ENCODE measurements at regions of chr16 and their contacts with region 1.

Region 1: GRCh38 chr16:3490911-3491629 is 4.2 kb downstream of the C16orf90 start:
- DNase-seq: no peak
- ATAC-seq: peak in 5 of 8 donors; percentile 4 to 25 (median 14)
- H3K4me3 ChIP-seq: no peak overlapping the region
- H3K27ac ChIP-seq: no peak overlapping the region
- H3K4me1 ChIP-seq: peaks cover 0 to 24% (median 9%) of the 10 kb centered on the region in 9 donors
- H3K27me3 ChIP-seq: no peaks in the 10 kb centered on the region
- CTCF ChIP-seq: peak in 2 of 9 donors; percentile 10 to 21

Region 2: GRCh38 chr16:3182608-3183444 is 308.2 kb before region 1 on chr16:
- intact Hi-C with region 1: loop called in 1 of 10 experiments (anchors 10 kb)
- DNase-seq: no peak
- ATAC-seq: peak in 7 of 8 donors; percentile 17 to 62 (median 49)
- H3K4me3 ChIP-seq: peak overlapping the region in 9 of 10 donors; percentile 3 to 45 (median 25)
- H3K27ac ChIP-seq: no peak overlapping the region
- H3K4me1 ChIP-seq: peaks cover 0 to 21% (median 13%) of the 10 kb centered on the region in 9 donors
- H3K27me3 ChIP-seq: peaks cover 35 to 100% (median 100%) of the 10 kb centered on the region in 7 donors
- CTCF ChIP-seq: peak in 5 of 9 donors; percentile 14 to 45 (median 40)

Region 3: DNA sequence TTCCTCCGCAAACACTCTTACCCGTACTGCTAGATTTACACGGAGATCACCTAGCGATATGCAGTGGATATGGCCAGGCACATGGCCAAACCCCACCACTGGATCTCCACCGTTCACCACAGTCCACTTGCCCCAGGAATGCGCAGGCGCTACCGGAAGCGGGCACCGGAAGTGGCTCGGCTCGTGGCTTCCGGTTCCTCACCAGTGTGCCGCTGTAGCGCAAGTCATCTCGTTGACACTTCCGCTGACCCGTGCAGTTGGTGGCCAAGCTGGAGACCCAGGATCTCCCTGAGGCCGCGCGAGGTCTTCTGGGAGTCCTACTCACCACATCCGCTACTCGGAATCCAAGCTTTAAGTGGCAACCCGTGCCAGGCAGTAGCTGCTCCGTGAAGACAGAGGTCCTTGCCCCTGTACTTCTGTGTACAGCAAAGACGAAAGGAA is 59.3 kb before region 1 on chr16:
- intact Hi-C with region 1: loop called in 1 of 10 experiments (anchors 10 kb)
- DNase-seq: peak; percentile 22 to 61
- ATAC-seq: peak; percentile 67 to 96 (median 77)
- H3K4me3 ChIP-seq: peak overlapping the region in 8 of 10 donors; percentile 12 to 40 (median 31)
- H3K27ac ChIP-seq: peak overlapping the region in 1 of 10 donors; percentile 42
- H3K4me1 ChIP-seq: no peaks in the 10 kb centered on the region
- H3K27me3 ChIP-seq: peaks cover 0 to 3% (median 0%) of the 10 kb centered on the region in 7 donors
- CTCF ChIP-seq: no peak

Region 4: GRCh38 chr16:3674513-3675295 is 183.6 kb after region 1 on chr16:
- intact Hi-C with region 1: no loop called
- DNase-seq: no peak
- ATAC-seq: no peak
- H3K4me3 ChIP-seq: no peak overlapping the region
- H3K27ac ChIP-seq: no peak overlapping the region
- H3K4me1 ChIP-seq: peaks cover 0 to 27% (median 16%) of the 10 kb centered on the region in 9 donors
- H3K27me3 ChIP-seq: no peaks in the 10 kb centered on the region
- CTCF ChIP-seq: no peak

Measured in heart right ventricle (tissue), 16 donors.